T-cell (primary cell): ENCODE measurements at regions of chr6 and their contacts with region 1.

Region 1: DNA sequence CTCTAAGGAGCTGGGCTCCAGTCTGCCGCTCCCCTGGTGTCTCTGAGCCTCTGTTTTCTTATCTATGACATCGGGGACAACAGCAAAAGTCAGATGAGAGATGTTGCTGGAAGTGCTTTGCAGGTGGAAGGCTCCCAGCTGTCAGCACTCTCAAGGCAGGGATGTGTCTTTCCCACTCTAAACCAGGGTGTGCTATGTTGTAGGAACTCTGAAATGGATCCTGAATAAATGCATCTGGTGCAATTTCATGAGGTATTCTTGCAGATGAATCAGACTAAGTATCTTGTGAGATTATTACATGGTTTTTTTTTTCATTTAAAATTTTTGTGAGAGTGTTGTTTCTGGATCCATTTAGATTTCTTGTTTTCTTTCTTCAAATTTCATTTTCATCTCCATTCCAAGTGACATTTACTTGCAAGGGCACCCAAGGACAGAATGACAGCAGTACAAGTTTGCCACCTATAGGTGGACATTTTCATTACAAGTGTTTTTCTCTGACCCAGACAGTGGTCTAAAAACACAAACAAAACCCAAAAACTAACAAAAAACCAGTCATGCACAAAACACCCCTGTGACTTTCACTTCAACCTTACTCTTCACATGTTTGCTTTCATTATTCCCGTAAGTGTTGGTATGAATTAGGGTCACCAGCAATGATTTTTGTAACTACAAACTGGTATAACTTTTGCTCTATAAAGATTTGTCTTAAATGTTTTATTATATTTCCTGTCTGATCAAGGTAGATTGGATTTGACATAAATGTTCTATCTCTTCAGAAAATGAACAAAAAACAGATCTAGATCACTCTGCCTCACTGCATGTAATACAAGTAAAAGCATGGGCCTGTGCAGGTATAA is 14.7 kb upstream of the SIM1 start:
- DNase-seq: peak in 1 of 35 experiments; percentile 46
- ATAC-seq: no peak
- H3K4me3 ChIP-seq: no peak overlapping the region
- H3K4me3 Mint-ChIP-seq: no peak overlapping the region
- H3K27ac ChIP-seq: no peak overlapping the region
- H3K27ac Mint-ChIP-seq: no peak overlapping the region
- H3K4me1 ChIP-seq: no peaks in the 10 kb centered on the region
- H3K4me1 Mint-ChIP-seq: no peaks in the 10 kb centered on the region
- H3K27me3 ChIP-seq: peaks cover 7 to 9% of the 10 kb centered on the region in 2 experiments
- H3K27me3 Mint-ChIP-seq: peaks cover 32 to 35% of the 10 kb centered on the region in 2 donors

Region 2: DNA sequence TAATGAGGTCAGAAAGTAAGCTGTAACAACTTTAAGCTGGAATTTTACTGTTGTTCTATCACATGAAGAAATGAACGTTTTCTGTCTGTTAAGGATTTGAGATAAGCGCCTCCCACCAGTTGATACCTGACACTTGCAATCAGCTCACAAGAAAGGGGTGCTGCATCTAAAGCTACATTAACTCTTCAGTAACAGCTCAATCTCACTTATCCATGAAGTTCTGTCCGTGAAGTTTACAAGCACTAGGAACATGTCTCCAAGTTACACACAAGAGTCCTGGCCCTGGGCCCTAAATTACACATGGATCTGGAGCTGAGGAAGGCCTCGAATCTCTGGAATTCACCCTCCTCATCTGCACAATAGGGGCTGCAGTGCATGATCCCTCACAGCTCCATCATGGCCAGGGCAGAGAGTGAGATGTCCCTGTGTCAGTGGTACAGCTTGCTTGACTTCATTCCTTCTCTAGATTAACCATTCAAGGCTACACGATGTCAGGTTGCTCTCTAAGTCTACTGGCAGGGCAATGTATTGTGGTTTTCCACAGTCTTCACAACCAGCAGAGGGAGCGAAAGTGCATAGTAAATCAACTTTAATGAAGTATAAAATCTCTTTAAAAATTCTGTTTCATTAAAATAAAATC is 303.0 kb before region 1 on chr6:
- CTCF ChIA-PET with region 1: interaction called in 1 of 2 experiments, 11 read pairs
- POLR2A ChIA-PET with region 1: no interaction called
- DNase-seq: no peak
- ATAC-seq: no peak
- H3K4me3 ChIP-seq: no peak overlapping the region
- H3K4me3 Mint-ChIP-seq: no peak overlapping the region
- H3K27ac ChIP-seq: no peak overlapping the region
- H3K27ac Mint-ChIP-seq: no peak overlapping the region
- H3K4me1 ChIP-seq: no peaks in the 10 kb centered on the region
- H3K4me1 Mint-ChIP-seq: no peaks in the 10 kb centered on the region
- H3K27me3 ChIP-seq: no peaks in the 10 kb centered on the region
- H3K27me3 Mint-ChIP-seq: peaks cover 0 to 2% of the 10 kb centered on the region in 2 donors

Region 3: GRCh38 chr6:100346828-100347227 is 132.6 kb before region 1 on chr6:
- CTCF ChIA-PET with region 1: no interaction called
- POLR2A ChIA-PET with region 1: no interaction called
- DNase-seq: no peak
- ATAC-seq: no peak
- H3K4me3 ChIP-seq: no peak overlapping the region
- H3K4me3 Mint-ChIP-seq: no peak overlapping the region
- H3K27ac ChIP-seq: no peak overlapping the region
- H3K27ac Mint-ChIP-seq: no peak overlapping the region
- H3K4me1 ChIP-seq: no peaks in the 10 kb centered on the region
- H3K4me1 Mint-ChIP-seq: no peaks in the 10 kb centered on the region
- H3K27me3 ChIP-seq: no peaks in the 10 kb centered on the region
- H3K27me3 Mint-ChIP-seq: no peaks in the 10 kb centered on the region